Heart left ventricle (tissue), 16 donors: ENCODE measurements at regions of chr18 and their contacts with region 1.

Region 1: DNA sequence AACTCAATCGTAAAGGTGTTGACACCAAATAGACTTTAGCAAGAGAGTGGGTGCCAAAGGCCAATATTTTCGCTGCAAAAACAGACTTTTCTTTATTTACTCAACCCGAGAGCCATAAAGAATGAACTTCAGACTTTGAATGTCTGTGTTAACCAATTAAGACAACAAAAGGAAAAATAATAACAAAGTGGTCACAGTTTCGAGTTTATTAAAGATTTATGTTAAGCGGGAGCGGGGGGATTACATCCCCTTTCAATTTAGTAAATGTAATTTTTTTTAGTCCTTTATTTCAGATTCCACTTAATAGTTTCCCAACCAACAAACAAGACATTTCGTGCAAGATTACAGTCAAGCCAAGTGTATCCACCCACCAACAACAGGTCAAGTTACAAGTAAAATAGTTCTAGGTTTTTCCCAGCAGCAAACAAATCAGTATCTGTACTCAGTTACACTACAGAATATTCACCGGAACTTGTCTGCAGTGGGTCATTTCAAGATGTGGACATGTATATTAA is 9.0 kb downstream of the CDH2 start:
- DNase-seq: no peak
- ATAC-seq: no peak
- H3K4me3 ChIP-seq: peak overlapping the region in 6 of 12 donors; percentile 3 to 81 (median 24)
- H3K27ac ChIP-seq: peak overlapping the region in 6 of 12 donors; percentile 5 to 97 (median 72)
- H3K4me1 ChIP-seq: peaks cover 0 to 38% (median 9%) of the 10 kb centered on the region in 12 donors
- H3K27me3 ChIP-seq: peaks cover 0 to 2% (median 0%) of the 10 kb centered on the region in 9 donors
- CTCF ChIP-seq: no peak
- POLR2A ChIP-seq: no peak

Region 2: DNA sequence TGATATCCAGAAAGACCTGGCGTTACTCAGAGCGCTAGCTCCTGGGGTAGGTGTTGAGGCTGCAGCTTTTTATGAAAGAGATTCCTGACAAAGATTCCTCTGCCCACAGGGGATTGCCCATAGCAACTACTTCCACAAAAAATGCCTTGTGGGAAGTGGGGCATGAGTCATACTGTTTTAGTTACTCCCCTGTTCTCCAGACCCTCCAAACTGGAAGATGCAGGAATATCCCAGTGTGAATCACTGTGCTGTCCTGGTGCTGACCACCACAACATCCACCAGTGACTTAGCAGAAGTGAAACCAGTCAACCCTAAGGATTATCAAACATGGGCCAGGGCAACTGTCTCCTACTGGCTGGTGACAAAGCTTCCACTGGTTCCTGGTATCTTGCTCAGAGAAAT is 52.7 kb before region 1 on chr18:
- intact Hi-C with region 1: loop called in 4 of 10 experiments (anchors 2 to 10 kb)
- DNase-seq: no peak
- ATAC-seq: no peak
- H3K4me3 ChIP-seq: no peak overlapping the region
- H3K27ac ChIP-seq: peak overlapping the region in 10 of 12 donors; percentile 15 to 97 (median 86)
- H3K4me1 ChIP-seq: peaks cover 0 to 69% (median 17%) of the 10 kb centered on the region in 12 donors
- H3K27me3 ChIP-seq: no peaks in the 10 kb centered on the region
- CTCF ChIP-seq: no peak
- POLR2A ChIP-seq: no peak